ENCODE measurements at regions of chr22 and their contacts with region 1.

Region 1: GRCh38 chr22:24005201-24005600 is at the start of gene GSTT4:
- DNase-seq: no peak
- H3K4me3 ChIP-seq: no peak within 1 kb of the TSS
- H3K27ac ChIP-seq: no peak within 1 kb of the TSS
- H3K4me1 ChIP-seq: no peaks in the 10 kb centered on the region
- H3K27me3 ChIP-seq: no peaks in the 10 kb centered on the region
- CTCF ChIP-seq: no peak
- total RNA-seq, gene GSTT4: not detected in 2 replicates

Region 2: GRCh38 chr22:23888615-23889401 is 116.4 kb before region 1 on chr22:
- CTCF ChIA-PET with region 1: no interaction called
- POLR2A ChIA-PET with region 1: interaction called, 10 read pairs
- intact Hi-C with region 1: no loop called
- DNase-seq: peak; percentile 32
- H3K4me3 ChIP-seq: no peak overlapping the region
- H3K27ac ChIP-seq: no peak overlapping the region
- H3K4me1 ChIP-seq: peaks cover 3% of the 10 kb centered on the region
- H3K27me3 ChIP-seq: no peaks in the 10 kb centered on the region
- CTCF ChIP-seq: peak; percentile 43

Region 3: GRCh38 chr22:24023204-24023789 is 18.1 kb after region 1 on chr22:
- CTCF ChIA-PET with region 1: no interaction called
- POLR2A ChIA-PET with region 1: interaction called, 24 read pairs
- intact Hi-C with region 1: no loop called
- DNase-seq: no peak
- H3K4me3 ChIP-seq: no peak overlapping the region
- H3K27ac ChIP-seq: no peak overlapping the region
- H3K4me1 ChIP-seq: peaks cover 8% of the 10 kb centered on the region
- H3K27me3 ChIP-seq: no peaks in the 10 kb centered on the region
- CTCF ChIP-seq: no peak

Region 4: DNA sequence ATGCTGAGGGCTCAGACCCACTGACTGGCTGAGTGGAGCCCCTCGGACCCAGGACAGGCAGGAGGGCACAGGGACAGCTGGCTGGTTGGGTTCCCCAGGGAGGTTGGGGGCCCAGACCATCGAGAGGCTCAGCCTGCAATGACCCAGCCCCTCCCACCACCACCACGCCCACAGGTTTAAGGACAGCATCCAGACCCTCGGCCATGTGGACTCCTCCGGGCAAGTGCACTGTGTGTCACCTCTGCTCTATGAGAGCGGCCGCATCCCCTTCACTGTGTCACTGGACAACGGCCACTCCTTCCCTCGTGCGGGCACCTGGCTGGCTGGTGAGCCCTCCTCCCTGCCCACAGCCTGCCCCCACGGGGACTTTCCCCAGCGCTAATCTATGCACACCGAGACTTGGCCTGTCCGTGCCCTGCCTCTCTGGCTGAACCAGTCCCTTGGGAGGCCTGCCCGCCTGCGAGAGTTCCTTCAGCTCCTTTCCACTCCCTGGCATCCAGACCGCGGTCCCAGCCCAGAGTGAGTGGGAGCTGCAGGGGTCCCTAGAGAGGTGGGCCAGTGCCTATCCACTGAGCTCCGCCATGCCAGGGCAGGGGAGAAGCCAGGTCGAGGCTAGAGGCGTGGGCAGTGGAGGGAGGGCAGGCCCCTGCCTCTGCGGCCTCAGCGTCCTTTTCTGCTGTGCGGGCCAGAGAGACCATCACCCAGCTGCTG is 178.3 kb after region 1 on chr22:
- CTCF ChIA-PET with region 1: no interaction called
- POLR2A ChIA-PET with region 1: interaction called, 12 read pairs
- intact Hi-C with region 1: no loop called
- DNase-seq: no peak
- H3K4me3 ChIP-seq: no peak overlapping the region
- H3K27ac ChIP-seq: no peak overlapping the region
- H3K4me1 ChIP-seq: no peaks in the 10 kb centered on the region
- H3K27me3 ChIP-seq: no peaks in the 10 kb centered on the region
- CTCF ChIP-seq: no peak